ENCODE measurements at regions of chr12 and their contacts with region 1.

Region 1: DNA sequence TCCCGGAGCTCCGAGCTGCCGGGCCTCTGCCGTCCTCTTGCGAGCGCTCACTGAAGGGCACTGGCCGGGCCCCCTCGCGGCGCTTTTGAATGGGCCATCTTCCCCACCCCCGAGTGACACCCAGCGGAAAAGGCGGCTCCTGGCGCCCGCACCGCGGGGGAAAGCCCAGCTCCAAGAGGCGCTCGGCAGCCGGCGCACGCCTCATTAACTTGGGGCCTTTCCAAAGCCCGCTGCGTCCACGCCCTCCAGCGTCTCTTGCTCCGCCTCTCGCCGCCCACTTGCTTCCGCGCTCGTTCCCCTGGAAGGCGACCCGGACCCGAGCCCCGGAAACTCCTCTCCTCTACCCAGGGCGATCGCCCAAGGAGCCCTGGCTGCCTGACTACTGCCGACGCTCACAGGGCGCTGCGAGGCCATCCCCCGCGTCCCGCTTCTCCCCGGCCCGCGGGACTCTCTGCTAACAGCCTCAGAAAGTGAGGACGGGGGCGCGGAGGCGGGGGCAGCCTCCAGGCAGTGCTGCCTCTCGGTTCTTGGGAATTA is at the start of gene PHLDA1:
- DNase-seq: peak; percentile 97
- ATAC-seq: peak; percentile 87
- H3K4me3 Mint-ChIP-seq: peak within 1 kb of the TSS; percentile 99
- H3K27ac Mint-ChIP-seq: peak within 1 kb of the TSS; percentile 96
- H3K4me1 Mint-ChIP-seq: peaks cover 37% of the 10 kb centered on the region
- H3K27me3 Mint-ChIP-seq: no peaks in the 10 kb centered on the region
- total RNA-seq, gene PHLDA1: 12.3 to 14.3 TPM

Region 2: DNA sequence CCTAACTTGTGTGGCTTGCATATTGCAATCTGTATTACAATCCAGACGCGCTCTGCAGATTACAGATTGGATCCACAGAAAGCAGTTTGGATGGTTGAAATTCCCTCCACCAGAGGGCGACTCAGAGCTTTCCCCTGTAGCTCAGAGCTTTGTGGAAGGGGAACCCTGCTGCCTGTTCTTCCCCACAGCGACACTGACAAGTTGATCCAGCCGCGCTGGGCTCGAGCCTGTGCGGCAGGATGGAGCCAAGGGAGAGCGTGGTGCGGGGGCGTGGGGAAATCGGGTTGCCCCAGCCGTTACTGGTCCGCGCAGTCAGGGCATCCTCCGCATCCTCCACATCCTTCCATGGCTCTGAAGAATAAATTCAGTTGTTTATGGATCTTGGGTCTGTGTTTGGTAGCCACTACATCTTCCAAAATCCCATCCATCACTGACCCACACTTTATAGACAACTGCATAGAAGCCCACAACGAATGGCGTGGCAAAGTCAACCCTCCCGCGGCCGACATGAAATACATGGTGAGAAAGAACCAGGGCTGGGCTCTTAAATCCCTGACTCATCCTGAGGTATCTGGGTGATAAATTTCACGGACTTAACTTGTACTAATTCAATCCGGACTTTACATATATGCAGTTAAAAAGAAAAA is 697.1 kb before region 1 on chr12 and contains the start of gene GLIPR1L1:
- CTCF ChIA-PET with region 1: interaction called, 3 read pairs
- POLR2A ChIA-PET with region 1: no interaction called
- intact Hi-C with region 1: loop called (anchors 5 kb)
- DNase-seq: peak; percentile 91
- ATAC-seq: peak; percentile 82
- H3K4me3 Mint-ChIP-seq: peak within 1 kb of the TSS; percentile 61
- H3K27ac Mint-ChIP-seq: no peak within 1 kb of the TSS
- H3K4me1 Mint-ChIP-seq: peaks cover 25% of the 10 kb centered on the region
- H3K27me3 Mint-ChIP-seq: peaks cover 21% of the 10 kb centered on the region
- total RNA-seq, gene GLIPR1L1: not detected

Region 3: DNA sequence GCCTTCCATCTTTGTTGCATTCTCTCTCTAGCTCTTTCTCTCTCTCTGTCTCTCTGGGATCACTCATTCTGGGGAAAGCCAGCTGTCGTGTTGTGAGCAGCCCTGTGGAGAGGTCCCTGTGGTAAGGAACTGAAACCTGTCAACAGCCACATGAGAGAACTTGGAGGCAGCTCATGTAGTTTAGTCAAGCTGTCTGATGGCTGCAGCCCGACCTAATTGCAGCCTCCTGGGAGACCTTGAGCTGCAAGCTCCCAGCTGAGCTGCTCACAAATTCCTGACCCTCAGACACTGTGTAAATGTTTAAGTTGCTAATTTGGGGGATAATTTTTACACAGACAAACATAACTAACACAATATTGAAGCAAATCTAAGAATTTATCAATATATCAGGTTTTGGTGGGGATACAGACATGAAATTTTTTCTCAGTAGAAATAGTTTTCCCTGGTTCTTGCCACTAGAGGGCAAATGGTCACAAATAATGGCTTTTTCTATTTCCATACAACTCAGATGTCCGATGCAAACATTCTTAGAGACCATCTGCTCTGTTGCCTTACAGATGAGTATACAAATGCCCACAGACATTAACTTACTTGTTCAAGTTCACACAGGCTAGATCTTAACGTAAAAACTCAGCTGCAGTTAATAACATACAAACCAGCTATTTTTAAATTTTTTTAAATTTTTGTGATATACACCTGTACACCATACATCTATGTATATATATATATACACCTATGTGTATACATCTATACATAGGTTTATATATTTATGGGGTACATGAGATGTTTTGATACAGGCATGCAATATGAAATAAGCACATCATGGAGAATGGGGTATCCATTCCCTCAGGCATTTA is 504.7 kb before region 1 on chr12:
- CTCF ChIA-PET with region 1: interaction called, 11 read pairs
- POLR2A ChIA-PET with region 1: interaction called, 15 read pairs
- intact Hi-C with region 1: no loop called
- DNase-seq: peak; percentile 35
- ATAC-seq: peak; percentile 69
- H3K4me3 Mint-ChIP-seq: no peak overlapping the region
- H3K27ac Mint-ChIP-seq: no peak overlapping the region
- H3K4me1 Mint-ChIP-seq: peaks cover 6% of the 10 kb centered on the region
- H3K27me3 Mint-ChIP-seq: peaks cover 27% of the 10 kb centered on the region

Region 4: GRCh38 chr12:75816897-75817296 is 214.7 kb before region 1 on chr12:
- CTCF ChIA-PET with region 1: interaction called, 11 read pairs
- POLR2A ChIA-PET with region 1: interaction called, 3 read pairs
- intact Hi-C with region 1: loop called in 1 of 2 experiments (anchors 2 kb)
- DNase-seq: no peak
- ATAC-seq: peak; percentile 87
- H3K4me3 Mint-ChIP-seq: no peak overlapping the region
- H3K27ac Mint-ChIP-seq: no peak overlapping the region
- H3K4me1 Mint-ChIP-seq: peaks cover 11% of the 10 kb centered on the region
- H3K27me3 Mint-ChIP-seq: peaks cover 3% of the 10 kb centered on the region

Region 5: GRCh38 chr12:75977952-75978671 is 53.5 kb before region 1 on chr12:
- CTCF ChIA-PET with region 1: interaction called, 4 read pairs
- POLR2A ChIA-PET with region 1: interaction called, 13 read pairs
- intact Hi-C with region 1: loop called (anchors 1 kb)
- DNase-seq: peak; percentile 85
- ATAC-seq: peak; percentile 80
- H3K4me3 Mint-ChIP-seq: peak overlapping the region; percentile 59
- H3K27ac Mint-ChIP-seq: peak overlapping the region; percentile 100
- H3K4me1 Mint-ChIP-seq: peaks cover 69% of the 10 kb centered on the region
- H3K27me3 Mint-ChIP-seq: no peaks in the 10 kb centered on the region

Region 6: GRCh38 chr12:76348079-76348901 is 316.7 kb after region 1 on chr12 and contains the start of gene BBS10:
- CTCF ChIA-PET with region 1: interaction called, 5 read pairs
- POLR2A ChIA-PET with region 1: no interaction called
- intact Hi-C with region 1: loop called (anchors 1 to 5 kb)
- DNase-seq: peak; percentile 92
- ATAC-seq: peak; percentile 93
- H3K4me3 Mint-ChIP-seq: peak within 1 kb of the TSS; percentile 88
- H3K27ac Mint-ChIP-seq: peak within 1 kb of the TSS; percentile 94
- H3K4me1 Mint-ChIP-seq: peaks cover 21% of the 10 kb centered on the region
- H3K27me3 Mint-ChIP-seq: no peaks in the 10 kb centered on the region
- total RNA-seq, gene BBS10: 3.5 to 4.0 TPM

Measured in activated CD4-positive, alpha-beta T cell treated with anti-CD3 and anti-CD28 coated beads for 36 hours (primary cell).